IMR-90 (cell line): ENCODE measurements at regions of chr12 and their contacts with region 1.

Region 1: GRCh38 chr12:90987520-90987919 is 17.3 kb downstream of the EPYC start:
- DNase-seq: no peak
- ATAC-seq: no peak
- H3K4me3 ChIP-seq: no peak overlapping the region
- H3K27ac ChIP-seq: no peak overlapping the region
- H3K4me1 ChIP-seq: no peaks in the 10 kb centered on the region
- H3K27me3 ChIP-seq: no peaks in the 10 kb centered on the region
- CTCF ChIP-seq: no peak
- POLR2A ChIP-seq: no peak
- RAD21 ChIP-seq: no peak

Region 2: DNA sequence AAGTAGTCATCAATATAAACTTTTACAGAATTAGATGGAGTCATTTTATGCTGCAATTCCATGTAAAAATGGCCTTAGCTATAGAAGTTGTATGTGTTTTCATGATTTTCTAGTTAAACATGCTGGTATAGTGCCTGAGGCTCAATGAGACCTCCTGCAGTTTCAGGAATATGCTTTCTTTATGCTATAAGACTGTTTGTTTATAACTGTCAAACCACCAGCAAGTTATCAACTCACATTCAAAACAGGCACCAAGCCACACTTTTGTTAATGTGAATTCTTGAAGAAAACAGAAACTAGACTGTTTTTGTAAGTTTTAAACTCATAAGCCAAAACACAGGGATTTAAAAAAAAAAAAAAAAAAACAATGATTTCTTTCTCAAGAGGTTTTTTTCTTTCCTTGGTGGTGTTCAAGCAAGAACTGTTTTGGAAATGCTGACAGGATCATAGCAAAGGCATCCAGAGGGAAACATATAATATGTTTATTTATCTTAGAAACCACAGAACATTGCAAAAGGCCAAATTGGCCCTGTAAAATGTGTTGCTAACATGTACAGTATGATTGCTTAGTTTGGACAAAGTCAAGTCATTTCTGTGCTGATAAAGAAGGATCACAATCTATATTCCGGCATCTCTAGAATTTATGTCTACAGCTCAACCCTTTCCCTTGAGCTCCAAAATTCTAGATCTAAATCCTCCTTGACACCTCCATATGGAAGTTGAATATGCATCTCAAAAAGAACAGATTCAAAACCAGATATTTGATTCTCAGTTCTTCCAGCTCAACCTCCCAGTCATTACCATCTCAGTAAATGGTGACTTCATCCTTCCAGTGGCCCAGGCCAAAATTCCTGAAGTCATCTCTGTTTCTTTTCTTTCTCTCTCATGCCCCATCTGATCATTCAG is 152.8 kb after region 1 on chr12:
- CTCF ChIA-PET with region 1: no interaction called
- POLR2A ChIA-PET with region 1: no interaction called
- dilution Hi-C with region 1: no loop called
- in situ Hi-C with region 1: loop called (anchors 10 kb)
- intact Hi-C with region 1: no loop called
- DNase-seq: peak; percentile 95
- ATAC-seq: peak; percentile 53
- H3K4me3 ChIP-seq: no peak overlapping the region
- H3K27ac ChIP-seq: peak overlapping the region; percentile 93; the same call in 1 of the 2 replicates
- H3K4me1 ChIP-seq: peaks cover 16% of the 10 kb centered on the region
- H3K27me3 ChIP-seq: no peaks in the 10 kb centered on the region
- CTCF ChIP-seq: no peak
- POLR2A ChIP-seq: no peak
- RAD21 ChIP-seq: no peak